ENCODE measurements at regions of chrX and their contacts with region 1.

Region 1: DNA sequence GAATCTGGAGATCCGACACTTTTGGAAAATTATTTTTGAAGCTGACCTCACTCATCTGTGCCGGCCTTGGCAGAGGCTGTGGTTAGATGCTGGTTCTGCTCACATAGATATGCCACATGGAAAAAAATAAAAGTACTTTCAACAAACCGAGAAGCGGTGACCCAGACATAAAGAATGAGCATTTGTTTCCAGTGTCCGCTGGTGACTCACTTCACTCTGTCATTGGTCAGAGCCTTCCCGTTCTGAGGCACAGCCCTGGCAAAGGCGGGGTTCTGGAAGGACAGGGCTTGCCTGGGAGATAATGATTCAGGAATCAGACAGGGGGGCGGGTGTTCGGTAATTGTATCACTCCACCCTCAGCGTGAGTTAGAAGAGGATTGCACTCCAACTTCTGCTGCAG is 172.4 kb upstream of the MXRA5 start:
- DNase-seq: peak; percentile 92
- ATAC-seq: peak; percentile 80
- H3K4me3 ChIP-seq: no peak overlapping the region
- H3K27ac ChIP-seq: peak overlapping the region; percentile 91
- H3K4me1 ChIP-seq: peaks cover 8% of the 10 kb centered on the region
- H3K27me3 ChIP-seq: no peaks in the 10 kb centered on the region
- CTCF ChIP-seq: no peak
- POLR2A ChIP-seq: no peak
- RAD21 ChIP-seq: no peak

Region 2: GRCh38 chrX:3244955-3245354 is 273.9 kb before region 1 on chrX:
- CTCF ChIA-PET with region 1: no interaction called
- POLR2A ChIA-PET with region 1: no interaction called
- dilution Hi-C with region 1: no loop called
- in situ Hi-C with region 1: no loop called
- intact Hi-C with region 1: loop called (anchors 10 kb)
- DNase-seq: no peak
- ATAC-seq: no peak
- H3K4me3 ChIP-seq: no peak overlapping the region
- H3K27ac ChIP-seq: peak overlapping the region; percentile 78
- H3K4me1 ChIP-seq: peaks cover 12% of the 10 kb centered on the region
- H3K27me3 ChIP-seq: no peaks in the 10 kb centered on the region
- CTCF ChIP-seq: no peak
- POLR2A ChIP-seq: no peak
- RAD21 ChIP-seq: no peak

Region 3: DNA sequence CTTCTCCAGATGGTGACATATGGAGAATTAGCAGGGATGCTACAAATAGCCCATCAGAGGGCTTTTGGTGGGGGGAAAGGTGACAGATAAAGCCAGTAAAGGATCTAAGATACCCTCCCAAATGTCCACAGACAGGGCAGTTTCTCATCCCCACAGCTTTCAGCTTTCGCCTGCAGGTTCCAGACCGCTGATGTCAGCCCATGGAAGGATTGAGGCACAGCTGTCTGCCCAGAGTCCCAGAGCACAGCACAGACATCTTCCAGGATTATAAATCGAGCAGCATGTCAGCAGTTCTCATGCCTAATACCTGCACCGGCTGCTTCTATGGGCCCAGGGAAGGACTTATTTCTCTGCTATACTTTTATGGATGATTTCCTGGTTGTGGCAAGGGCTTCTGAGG is 75.7 kb before region 1 on chrX:
- CTCF ChIA-PET with region 1: no interaction called
- POLR2A ChIA-PET with region 1: interaction called, 17 read pairs
- dilution Hi-C with region 1: no loop called
- in situ Hi-C with region 1: no loop called
- intact Hi-C with region 1: no loop called
- DNase-seq: no peak
- ATAC-seq: no peak
- H3K4me3 ChIP-seq: no peak overlapping the region
- H3K27ac ChIP-seq: no peak overlapping the region
- H3K4me1 ChIP-seq: no peaks in the 10 kb centered on the region
- H3K27me3 ChIP-seq: no peaks in the 10 kb centered on the region
- CTCF ChIP-seq: no peak
- POLR2A ChIP-seq: no peak
- RAD21 ChIP-seq: no peak

Measured in IMR-90 (cell line).